ENCODE measurements at regions of chrX and their contacts with region 1.

Region 1: DNA sequence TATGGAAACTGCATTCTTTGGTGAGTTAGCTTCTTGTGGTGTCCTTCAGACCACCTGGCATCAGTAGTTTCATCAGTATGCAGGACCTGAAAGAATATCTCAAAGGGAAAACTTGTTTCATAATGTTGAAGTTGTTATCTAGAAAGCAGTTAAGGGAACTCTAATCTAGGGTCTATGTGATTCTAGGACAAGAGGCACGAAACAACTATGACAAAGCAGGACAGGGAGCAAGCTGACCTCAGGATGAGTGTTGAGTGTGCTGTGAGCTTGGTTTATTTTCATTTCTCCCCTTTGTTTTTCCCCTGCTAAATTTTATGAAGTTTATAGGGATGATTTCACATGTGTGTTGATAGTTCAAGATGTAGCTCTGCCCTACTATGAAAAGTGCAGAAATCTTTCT is 65.7 kb downstream of the MXRA5 start:
- DNase-seq: no peak
- ATAC-seq: no peak
- H3K4me3 ChIP-seq: no peak overlapping the region
- H3K27ac ChIP-seq: no peak overlapping the region
- H3K4me1 ChIP-seq: no peaks in the 10 kb centered on the region
- H3K27me3 ChIP-seq: no peaks in the 10 kb centered on the region
- CTCF ChIP-seq: no peak
- POLR2A ChIP-seq: no peak

Region 2: GRCh38 chrX:3244955-3245354 is 35.8 kb before region 1 on chrX:
- intact Hi-C with region 1: loop called in 1 of 10 experiments (anchors 2 kb)
- DNase-seq: no peak
- ATAC-seq: no peak
- H3K4me3 ChIP-seq: no peak overlapping the region
- H3K27ac ChIP-seq: no peak overlapping the region
- H3K4me1 ChIP-seq: no peaks in the 10 kb centered on the region
- H3K27me3 ChIP-seq: no peaks in the 10 kb centered on the region
- CTCF ChIP-seq: peak in 8 of 12 donors; percentile 9 to 35 (median 24)
- POLR2A ChIP-seq: no peak